Activated CD4-positive, alpha-beta memory T cell treated with anti-CD3 and anti-CD28 coated beads, Interleukin-2, amount 10 ng/mL, durations not matched to agents 7 days and 5 days (primary cell): ENCODE measurements at regions of chr17 and their contacts with region 1.

Region 1: DNA sequence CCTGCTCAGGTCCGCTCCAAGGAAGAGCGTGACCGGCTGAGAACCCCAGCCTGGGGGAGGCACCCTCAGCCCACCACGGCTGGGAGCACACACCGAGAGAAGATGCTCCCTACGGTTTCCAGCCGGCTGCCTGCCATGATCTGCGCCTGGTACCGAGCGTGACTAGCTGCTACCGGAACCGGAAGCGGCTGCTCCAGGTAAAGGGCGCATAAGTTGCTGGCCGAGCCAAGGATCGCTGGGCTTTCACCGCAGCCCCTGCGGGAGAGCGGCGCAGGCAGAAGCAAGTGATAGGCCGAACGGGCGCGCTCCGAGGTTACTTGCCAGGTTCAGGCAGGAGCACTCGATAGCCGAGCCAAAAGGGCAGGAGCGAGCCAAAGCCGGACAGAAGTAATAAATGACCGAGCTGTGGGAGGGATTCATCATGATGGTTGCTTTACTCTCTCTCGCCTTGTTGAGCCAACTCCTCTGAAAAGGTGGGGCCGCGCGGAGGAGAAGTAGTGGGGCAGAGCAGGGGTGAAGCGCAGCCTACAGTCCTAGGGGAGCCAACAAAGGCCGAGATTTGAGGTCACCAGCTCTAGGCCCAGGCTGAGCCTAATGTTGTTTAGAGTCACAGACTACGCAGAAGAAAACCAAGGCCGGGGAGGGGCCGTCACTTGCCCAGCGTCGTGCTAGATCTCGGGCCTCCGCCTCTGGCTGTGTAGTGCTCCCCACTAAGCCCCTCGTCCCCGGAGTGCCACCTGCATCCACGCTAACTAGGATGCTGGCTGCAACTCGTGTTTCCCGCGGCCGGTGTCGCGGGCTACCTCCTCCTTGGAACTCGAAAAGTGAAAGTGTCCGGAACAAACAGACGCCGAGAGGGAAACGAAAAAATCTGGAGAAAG is at the start of gene MRPS23:
- DNase-seq: peak; percentile 98
- H3K4me3 Mint-ChIP-seq: peak within 1 kb of the TSS; percentile 95
- H3K27ac Mint-ChIP-seq: peak within 1 kb of the TSS; percentile 98
- H3K4me1 Mint-ChIP-seq: peaks cover 43% of the 10 kb centered on the region
- H3K27me3 Mint-ChIP-seq: no peaks in the 10 kb centered on the region
- total RNA-seq, gene MRPS23: 30.8 to 35.3 TPM

Region 2: DNA sequence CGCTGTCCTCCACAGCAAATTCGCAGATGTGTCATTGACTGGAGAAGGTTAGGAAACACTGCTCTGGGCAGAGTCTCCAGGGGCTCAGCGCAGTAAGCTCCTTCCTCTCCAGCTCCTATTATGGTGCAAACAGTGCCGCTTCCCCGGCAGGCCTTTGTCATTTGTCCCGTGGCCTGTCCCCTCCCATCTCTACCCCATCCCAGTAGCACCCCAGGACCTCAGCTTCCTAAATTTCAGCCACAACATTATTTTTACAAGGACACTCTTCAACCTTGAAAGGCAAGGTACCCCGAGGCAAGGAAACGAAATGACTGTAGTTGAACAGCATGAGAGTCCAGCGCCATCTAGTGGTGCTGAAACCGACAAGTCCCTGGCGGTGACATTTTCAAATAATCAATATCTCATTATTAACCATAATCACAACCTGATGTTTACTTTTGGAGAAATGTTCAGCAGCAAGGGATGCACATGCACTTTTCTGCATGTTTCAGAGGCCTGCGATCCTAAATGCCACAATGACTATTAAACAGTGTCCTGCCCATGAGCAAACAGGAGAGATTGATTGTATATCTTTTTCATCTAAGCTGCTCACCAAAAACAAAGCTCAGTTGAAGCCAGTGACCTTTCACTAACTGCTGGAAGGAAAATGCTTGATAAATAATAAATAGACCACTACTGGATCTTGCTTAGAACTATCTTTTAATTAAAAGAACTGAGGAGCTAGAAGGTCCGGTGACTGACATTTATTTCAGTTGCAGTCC is 16.8 kb before region 1 on chr17:
- CTCF ChIA-PET with region 1: interaction called, 26 read pairs
- POLR2A ChIA-PET with region 1: interaction called, 10 read pairs
- DNase-seq: peak; percentile 75
- H3K4me3 Mint-ChIP-seq: no peak overlapping the region
- H3K27ac Mint-ChIP-seq: no peak overlapping the region
- H3K4me1 Mint-ChIP-seq: peaks cover 14% of the 10 kb centered on the region
- H3K27me3 Mint-ChIP-seq: peaks cover 3% of the 10 kb centered on the region

Region 3: GRCh38 chr17:57838857-57839570 is 11.1 kb before region 1 on chr17:
- CTCF ChIA-PET with region 1: interaction called, 26 read pairs
- POLR2A ChIA-PET with region 1: interaction called, 10 read pairs
- DNase-seq: no peak
- H3K4me3 Mint-ChIP-seq: no peak overlapping the region
- H3K27ac Mint-ChIP-seq: no peak overlapping the region
- H3K4me1 Mint-ChIP-seq: peaks cover 11% of the 10 kb centered on the region
- H3K27me3 Mint-ChIP-seq: no peaks in the 10 kb centered on the region

Region 4: DNA sequence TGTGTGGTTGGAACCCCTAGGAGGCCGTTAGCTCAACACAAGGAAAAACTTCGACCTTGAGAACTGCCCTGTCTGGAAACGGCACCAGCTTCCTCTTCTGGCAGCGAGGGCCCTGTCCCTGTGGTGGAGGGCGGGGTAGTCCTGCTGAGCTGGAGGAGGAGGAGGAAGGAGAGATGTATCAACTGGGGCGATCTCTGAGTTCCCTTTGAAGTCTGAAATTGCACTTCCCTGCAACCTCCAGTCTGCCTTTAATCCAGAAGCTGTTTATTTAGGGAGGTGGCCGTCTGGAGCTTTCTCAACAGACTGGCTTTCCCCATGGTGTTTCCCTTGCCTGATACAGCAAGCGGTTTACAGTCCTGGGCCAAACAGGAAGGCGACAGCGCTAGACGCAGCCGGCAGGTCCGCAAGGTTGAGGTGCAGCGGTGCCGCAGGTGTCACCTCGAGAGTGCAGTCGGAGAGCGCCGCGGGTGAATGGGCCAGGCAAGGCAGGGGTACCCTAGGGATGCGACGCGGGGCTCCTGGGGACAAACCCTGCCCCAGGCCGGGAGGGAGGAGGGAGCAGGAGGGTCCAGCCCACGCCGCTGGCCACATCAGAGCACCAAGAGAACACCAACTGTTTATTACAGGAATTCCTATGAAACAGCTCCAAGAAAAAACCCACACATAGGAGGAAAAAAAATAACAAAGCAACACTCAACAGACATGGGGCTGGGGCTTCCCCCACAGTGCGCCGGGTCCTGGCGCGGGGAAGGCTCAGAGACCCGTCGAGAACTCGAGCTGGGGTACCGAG is 11.1 kb after region 1 on chr17:
- CTCF ChIA-PET with region 1: interaction called, 14 read pairs
- POLR2A ChIA-PET with region 1: interaction called, 24 read pairs
- DNase-seq: peak; percentile 37
- H3K4me3 Mint-ChIP-seq: peak overlapping the region; percentile 54
- H3K27ac Mint-ChIP-seq: no peak overlapping the region
- H3K4me1 Mint-ChIP-seq: peaks cover 12% of the 10 kb centered on the region
- H3K27me3 Mint-ChIP-seq: peaks cover 45% of the 10 kb centered on the region

Region 5: DNA sequence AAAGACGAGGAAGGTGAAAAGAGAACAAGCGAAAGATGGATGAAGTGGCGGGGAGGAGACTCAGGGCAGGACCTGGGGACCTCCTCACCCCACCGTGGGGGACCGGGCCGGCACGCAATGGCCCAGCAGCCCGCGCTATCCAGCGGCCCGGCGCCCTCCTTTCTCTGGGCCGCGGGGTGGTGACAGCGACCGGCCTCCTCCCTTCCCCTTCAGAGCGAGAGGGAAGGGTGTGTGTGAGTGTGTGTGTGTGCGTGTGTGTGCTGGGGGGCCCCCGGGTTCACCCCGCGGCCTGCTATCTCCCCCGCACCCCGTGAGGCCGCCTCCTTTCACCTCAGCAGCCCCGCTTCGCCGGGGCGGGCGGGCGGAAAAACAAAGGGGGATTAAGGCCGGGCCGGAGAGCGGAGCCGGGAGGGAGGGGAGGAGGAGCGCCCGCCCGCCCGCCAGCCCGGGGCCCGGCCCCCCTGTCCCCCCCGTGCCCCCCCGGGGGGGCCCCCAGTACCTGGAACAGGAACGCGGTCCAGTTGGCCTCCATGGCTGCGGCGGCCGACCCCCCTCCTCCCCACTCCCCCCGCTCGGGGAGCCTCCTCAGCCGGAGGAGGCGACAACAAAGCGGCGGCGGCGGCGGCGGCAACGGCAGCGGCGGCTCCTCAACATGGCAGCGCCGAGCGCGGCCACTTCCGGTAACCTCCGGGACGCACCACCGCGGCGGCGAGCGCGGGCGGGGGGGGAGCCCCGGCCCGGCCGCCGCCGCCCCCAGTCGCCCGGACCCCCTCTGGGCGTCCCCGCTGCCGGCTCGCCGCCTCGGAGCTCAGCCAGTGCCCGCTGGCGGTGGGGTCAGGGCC is 137.7 kb after region 1 on chr17 and contains the start of gene VEZF1:
- CTCF ChIA-PET with region 1: interaction called, 137 read pairs
- POLR2A ChIA-PET with region 1: interaction called, 16 read pairs
- DNase-seq: peak; percentile 82
- H3K4me3 Mint-ChIP-seq: peak within 1 kb of the TSS; percentile 92
- H3K27ac Mint-ChIP-seq: peak within 1 kb of the TSS; percentile 89
- H3K4me1 Mint-ChIP-seq: peaks cover 68% of the 10 kb centered on the region
- H3K27me3 Mint-ChIP-seq: no peaks in the 10 kb centered on the region
- total RNA-seq, gene VEZF1: 44.6 to 46.6 TPM